ENCODE measurements at regions of chr1 and their contacts with region 1.

Region 1: GRCh38 chr1:78004719-78005447 is at the start of gene DNAJB4:
- DNase-seq: peak; percentile 40 to 90
- H3K4me3 ChIP-seq: peak within 1 kb of the TSS; percentile 55 to 74
- H3K27ac ChIP-seq: peak within 1 kb of the TSS; percentile 88
- H3K4me1 ChIP-seq: peaks cover 0 to 6% of the 10 kb centered on the region in 2 donors
- H3K27me3 ChIP-seq: no peaks in the 10 kb centered on the region
- CTCF ChIP-seq: no peak
- total RNA-seq, gene DNAJB4: 20.1 TPM

Region 2: DNA sequence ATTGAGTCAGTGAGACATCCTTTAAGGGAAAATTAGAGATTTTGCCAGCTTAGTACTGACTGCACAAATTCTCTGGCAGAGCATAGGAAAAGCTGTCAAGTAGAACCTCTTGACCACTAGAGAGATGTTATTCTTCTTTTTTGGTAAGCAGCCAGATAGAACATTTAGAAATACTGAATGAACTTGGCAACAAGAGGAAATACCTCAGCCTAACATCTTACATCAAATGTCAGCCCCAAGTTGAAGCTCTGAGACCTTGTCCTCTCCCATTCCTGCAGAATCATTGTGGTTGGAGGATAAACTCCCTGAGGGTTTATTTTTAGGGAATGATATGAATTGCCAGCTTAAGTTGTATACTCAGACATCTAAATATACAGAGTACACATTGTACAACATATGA is 172.0 kb before region 1 on chr1:
- intact Hi-C with region 1: loop called (anchors 10 kb)
- DNase-seq: no peak
- H3K4me3 ChIP-seq: peak overlapping the region in 1 of 2 donors; percentile 35
- H3K27ac ChIP-seq: peak overlapping the region; percentile 83 to 93
- H3K4me1 ChIP-seq: peaks cover 3 to 55% of the 10 kb centered on the region in 2 donors
- H3K27me3 ChIP-seq: no peaks in the 10 kb centered on the region
- CTCF ChIP-seq: no peak

Region 3: GRCh38 chr1:77978969-77979876 is 25.7 kb before region 1 on chr1 and contains the start of gene FUBP1:
- intact Hi-C with region 1: loop called (anchors 1 kb)
- DNase-seq: peak; percentile 86 to 98
- H3K4me3 ChIP-seq: peak within 1 kb of the TSS; percentile 67 to 86
- H3K27ac ChIP-seq: peak within 1 kb of the TSS; percentile 97 to 98
- H3K4me1 ChIP-seq: peaks cover 0 to 32% of the 10 kb centered on the region in 2 donors
- H3K27me3 ChIP-seq: no peaks in the 10 kb centered on the region
- CTCF ChIP-seq: peak; percentile 84 to 86 (median 86)
- total RNA-seq, gene FUBP1: 90.3 TPM

Region 4: GRCh38 chr1:78377356-78377928 is 372.6 kb after region 1 on chr1:
- intact Hi-C with region 1: no loop called
- DNase-seq: no peak
- H3K4me3 ChIP-seq: no peak overlapping the region
- H3K27ac ChIP-seq: no peak overlapping the region
- H3K4me1 ChIP-seq: no peaks in the 10 kb centered on the region
- H3K27me3 ChIP-seq: no peaks in the 10 kb centered on the region
- CTCF ChIP-seq: no peak